ENCODE measurements at regions of chr15 and their contacts with region 1.

Region 1: GRCh38 chr15:70488002-70488605 is 275.3 kb downstream of the UACA start:
- DNase-seq: peak; percentile 72 to 83 (median 72)
- H3K4me3 ChIP-seq: no peak overlapping the region
- H3K27ac ChIP-seq: no peak overlapping the region
- H3K4me1 ChIP-seq: peaks cover 34 to 96% (median 84%) of the 10 kb centered on the region in 4 experiments
- H3K27me3 ChIP-seq: no peaks in the 10 kb centered on the region

Region 2: DNA sequence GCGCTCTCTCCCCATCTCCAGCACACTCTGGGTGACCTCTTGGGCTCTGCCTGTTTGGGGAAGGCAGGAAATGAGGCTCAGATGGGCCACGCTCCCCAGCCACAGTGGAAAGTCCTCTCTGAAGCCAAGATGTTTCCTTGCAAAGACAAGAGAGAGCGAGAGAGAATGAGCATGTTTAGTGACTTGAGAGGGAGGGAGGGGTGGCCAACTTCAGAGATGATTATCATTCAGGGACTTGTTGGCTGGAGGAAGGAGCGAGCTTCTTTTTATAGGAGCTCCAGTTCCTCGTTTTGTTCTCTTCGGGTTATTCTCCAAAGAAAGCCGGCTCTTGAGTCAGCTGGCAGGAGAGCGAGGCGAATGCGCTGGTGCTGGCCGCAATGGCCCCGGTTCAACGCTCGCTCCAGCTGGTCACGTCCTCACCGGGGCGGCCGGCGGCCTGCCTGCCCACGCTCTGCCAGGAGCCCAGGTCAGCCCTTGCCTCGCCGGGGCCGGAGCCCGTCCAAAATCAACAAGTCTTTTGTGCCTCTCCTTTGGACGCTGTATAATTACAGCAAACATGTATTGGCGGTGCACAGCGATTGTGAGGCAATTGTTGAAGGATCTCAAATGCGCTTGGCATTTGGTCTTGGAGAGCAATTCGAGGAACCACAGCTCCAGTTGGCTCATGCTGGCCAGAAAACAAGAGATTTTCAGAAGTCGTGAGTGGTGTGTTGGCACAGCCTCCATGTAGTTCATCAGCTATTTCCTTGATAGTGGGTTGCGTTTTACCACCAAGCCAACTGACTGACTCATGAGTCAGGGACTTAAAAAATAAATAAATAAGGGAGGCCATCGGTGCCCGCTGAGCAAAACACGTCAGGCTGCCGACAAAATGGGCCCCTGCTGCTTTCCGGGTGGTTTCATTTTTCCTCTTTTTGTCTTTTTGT is 13.4 kb before region 1 on chr15:
- CTCF ChIA-PET with region 1: interaction called, 57 read pairs
- POLR2A ChIA-PET with region 1: interaction called, 4 read pairs
- DNase-seq: peak; percentile 96 to 99 (median 98)
- H3K4me3 ChIP-seq: peak overlapping the region in 5 of 7 experiments; percentile 37 to 67 (median 58)
- H3K27ac ChIP-seq: peak overlapping the region; percentile 56 to 65
- H3K4me1 ChIP-seq: peaks cover 11 to 76% (median 67%) of the 10 kb centered on the region in 4 experiments
- H3K27me3 ChIP-seq: no peaks in the 10 kb centered on the region

Region 3: GRCh38 chr15:70504299-70504951 is 16.3 kb after region 1 on chr15:
- CTCF ChIA-PET with region 1: interaction called, 281 read pairs
- POLR2A ChIA-PET with region 1: interaction called, 21 read pairs
- DNase-seq: peak in 2 of 3 donors; percentile 82
- H3K4me3 ChIP-seq: peak overlapping the region in 3 of 7 experiments; percentile 34 to 52 (median 41)
- H3K27ac ChIP-seq: no peak overlapping the region
- H3K4me1 ChIP-seq: peaks cover 33 to 100% (median 90%) of the 10 kb centered on the region in 4 experiments
- H3K27me3 ChIP-seq: no peaks in the 10 kb centered on the region

Region 4: DNA sequence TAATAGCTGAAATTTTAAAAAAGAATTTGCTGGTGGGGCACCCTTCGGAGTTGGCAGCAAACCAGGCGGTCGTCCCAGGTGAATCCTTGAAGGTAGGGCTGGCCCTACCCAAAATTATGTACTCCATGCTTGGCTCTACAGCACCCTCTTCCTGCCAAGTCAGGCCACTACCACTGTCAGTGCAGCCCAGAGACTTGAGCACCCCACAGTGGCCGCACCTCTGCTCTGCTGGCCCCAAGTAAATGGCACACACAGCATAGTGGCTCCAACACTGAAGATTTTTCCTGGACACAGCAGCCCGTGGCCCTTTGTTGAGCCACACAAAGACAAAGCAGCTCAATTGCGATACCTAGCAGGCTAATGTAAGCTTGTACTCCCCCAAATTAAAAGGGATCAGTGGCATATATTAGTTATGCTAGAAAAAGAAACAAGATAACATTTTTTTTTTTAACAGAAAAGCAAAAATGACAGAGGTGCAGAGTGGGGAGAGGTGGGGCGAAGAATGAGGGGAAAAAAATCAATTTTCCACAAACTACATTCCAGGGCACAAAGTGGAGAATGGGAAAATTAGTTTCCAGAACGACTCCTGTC is 24.8 kb after region 1 on chr15:
- CTCF ChIA-PET with region 1: interaction called, 281 read pairs
- POLR2A ChIA-PET with region 1: interaction called, 3 read pairs
- DNase-seq: peak; percentile 81 to 86 (median 83)
- H3K4me3 ChIP-seq: no peak overlapping the region
- H3K27ac ChIP-seq: no peak overlapping the region
- H3K4me1 ChIP-seq: peaks cover 7 to 59% (median 38%) of the 10 kb centered on the region in 4 experiments
- H3K27me3 ChIP-seq: no peaks in the 10 kb centered on the region